ENCODE measurements at regions of chr3 and their contacts with region 1.

Region 1: GRCh38 chr3:187745201-187746058 is at the start of gene BCL6:
- DNase-seq: peak; percentile 91
- H3K4me3 Mint-ChIP-seq: peak within 1 kb of the TSS; percentile 90
- H3K27ac Mint-ChIP-seq: peak within 1 kb of the TSS; percentile 99
- H3K4me1 Mint-ChIP-seq: peaks cover 47% of the 10 kb centered on the region
- H3K27me3 Mint-ChIP-seq: no peaks in the 10 kb centered on the region
- total RNA-seq, gene BCL6: 41.4 to 51.3 TPM

Region 2: DNA sequence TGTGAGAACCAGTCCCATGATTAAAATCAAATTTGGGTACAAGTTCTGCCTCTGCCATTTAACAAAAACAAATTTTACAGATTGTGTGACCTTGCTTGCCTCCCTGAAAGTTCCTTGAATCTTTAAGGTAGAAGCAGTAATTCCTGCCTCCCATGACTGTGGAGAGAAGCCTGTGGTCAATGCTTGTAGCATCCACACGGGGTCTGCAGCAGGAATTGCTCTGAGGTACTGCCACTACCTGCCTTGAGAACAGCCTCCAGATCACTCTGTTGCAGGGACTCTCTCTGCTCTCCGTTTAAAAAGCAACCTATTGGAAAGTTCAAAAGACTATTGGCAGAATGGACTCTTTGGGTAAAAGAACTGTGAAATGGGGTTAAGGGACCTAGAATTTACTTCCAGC is 151.2 kb before region 1 on chr3:
- CTCF ChIA-PET with region 1: no interaction called
- POLR2A ChIA-PET with region 1: no interaction called
- intact Hi-C with region 1: no loop called
- DNase-seq: no peak
- H3K4me3 Mint-ChIP-seq: no peak overlapping the region
- H3K27ac Mint-ChIP-seq: no peak overlapping the region
- H3K4me1 Mint-ChIP-seq: no peaks in the 10 kb centered on the region
- H3K27me3 Mint-ChIP-seq: peaks cover 35% of the 10 kb centered on the region

Region 3: DNA sequence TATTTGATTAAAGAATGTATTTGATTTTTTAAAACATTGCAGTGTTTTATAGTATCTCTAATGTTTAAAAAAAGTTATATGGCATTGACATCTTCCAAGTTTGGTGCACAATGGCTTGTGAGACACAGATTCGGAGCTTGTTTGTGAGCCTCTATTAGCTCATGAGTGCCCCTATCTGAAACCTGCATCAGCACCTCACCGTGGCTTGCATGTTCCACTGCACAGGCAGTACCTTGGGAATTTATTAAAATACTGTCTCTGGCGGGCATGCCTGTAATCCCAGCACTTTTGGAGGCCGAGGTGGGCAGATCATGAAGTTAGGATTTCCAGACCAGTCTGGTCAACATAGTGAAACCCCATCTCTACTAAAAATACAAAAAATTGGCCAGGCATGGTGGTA is 36.3 kb before region 1 on chr3:
- CTCF ChIA-PET with region 1: no interaction called
- POLR2A ChIA-PET with region 1: no interaction called
- intact Hi-C with region 1: no loop called
- DNase-seq: no peak
- H3K4me3 Mint-ChIP-seq: no peak overlapping the region
- H3K27ac Mint-ChIP-seq: no peak overlapping the region
- H3K4me1 Mint-ChIP-seq: peaks cover 7% of the 10 kb centered on the region
- H3K27me3 Mint-ChIP-seq: no peaks in the 10 kb centered on the region

Region 4: DNA sequence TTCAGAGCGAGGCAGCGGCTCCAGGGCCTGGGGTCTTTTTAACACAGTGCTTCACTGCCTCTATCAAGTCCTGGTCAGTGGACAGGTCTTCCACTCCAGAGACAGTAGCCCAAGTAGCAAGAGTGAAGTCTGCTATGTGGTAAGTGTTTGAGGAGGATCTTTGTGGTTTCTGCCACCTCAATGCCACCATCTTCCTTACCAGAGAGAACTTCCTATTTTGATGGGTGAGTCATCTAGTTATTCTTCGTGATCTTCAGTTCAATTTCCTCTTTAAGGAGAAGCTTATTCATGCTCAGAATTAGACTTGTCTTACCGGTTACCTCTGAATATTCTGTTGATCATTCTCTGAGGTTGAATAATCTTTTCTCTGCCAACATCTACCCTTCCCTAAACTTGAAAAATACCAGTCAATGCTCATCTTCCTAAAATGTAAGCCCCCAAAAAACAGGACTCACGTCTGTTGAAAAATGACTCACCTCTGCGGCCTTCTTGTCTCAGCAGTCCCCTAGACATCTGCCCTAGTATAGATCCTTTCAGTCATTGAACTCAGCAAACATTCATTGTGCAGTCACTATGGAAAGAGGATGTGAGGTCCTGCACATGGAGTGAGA is 32.0 kb after region 1 on chr3:
- CTCF ChIA-PET with region 1: interaction called, 8 read pairs
- POLR2A ChIA-PET with region 1: interaction called, 9 read pairs
- intact Hi-C with region 1: loop called (anchors 1 kb)
- DNase-seq: peak; percentile 72
- H3K4me3 Mint-ChIP-seq: peak overlapping the region; percentile 21
- H3K27ac Mint-ChIP-seq: peak overlapping the region; percentile 91
- H3K4me1 Mint-ChIP-seq: peaks cover 50% of the 10 kb centered on the region
- H3K27me3 Mint-ChIP-seq: no peaks in the 10 kb centered on the region

Region 5: DNA sequence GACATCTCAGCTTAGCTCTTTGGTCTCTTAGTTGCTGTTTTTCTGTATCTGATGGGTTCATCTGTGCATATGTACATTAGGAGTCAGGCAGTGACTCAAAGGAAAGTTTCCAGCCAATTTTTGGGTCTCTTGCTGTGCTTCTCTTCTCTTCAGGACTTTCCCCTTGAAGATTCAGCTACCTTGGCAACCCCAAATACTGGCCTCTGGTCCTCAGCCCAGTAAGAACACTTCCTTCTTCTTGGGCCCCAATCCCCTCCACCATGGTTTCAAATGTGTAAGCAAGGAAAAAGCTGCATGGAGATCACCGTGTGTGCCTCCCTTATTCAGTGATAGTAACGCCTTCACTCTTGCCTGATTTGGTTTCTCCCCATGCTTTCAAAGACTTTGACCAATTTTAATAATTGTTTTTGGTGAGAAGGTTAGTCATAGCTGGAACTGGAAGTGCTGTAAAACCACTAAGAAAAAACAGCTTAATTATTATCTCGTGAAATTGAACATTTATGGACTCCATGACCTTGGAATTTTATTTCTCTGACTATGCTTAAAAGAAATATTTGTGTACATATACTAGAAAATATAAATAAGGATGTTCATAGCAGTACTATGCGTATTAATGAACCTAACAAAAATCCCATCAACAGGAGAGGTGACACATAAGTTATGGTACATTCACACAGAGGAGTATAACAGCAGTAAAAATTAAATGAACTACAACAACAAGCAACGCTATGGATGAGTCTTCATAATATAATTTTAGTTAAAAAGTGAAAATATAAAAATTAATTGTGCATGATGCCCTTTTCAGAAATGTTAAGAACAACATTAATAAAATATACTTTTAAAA is 125.2 kb after region 1 on chr3:
- CTCF ChIA-PET with region 1: interaction called, 15 read pairs
- POLR2A ChIA-PET with region 1: interaction called, 4 read pairs
- intact Hi-C with region 1: loop called (anchors 1 kb)
- DNase-seq: peak; percentile 45
- H3K4me3 Mint-ChIP-seq: no peak overlapping the region
- H3K27ac Mint-ChIP-seq: peak overlapping the region; percentile 40
- H3K4me1 Mint-ChIP-seq: peaks cover 22% of the 10 kb centered on the region
- H3K27me3 Mint-ChIP-seq: no peaks in the 10 kb centered on the region

Region 6: GRCh38 chr3:188154014-188154808 is 408.8 kb after region 1 on chr3 and contains the start of gene LPP:
- CTCF ChIA-PET with region 1: interaction called, 33 read pairs
- POLR2A ChIA-PET with region 1: interaction called, 16 read pairs
- intact Hi-C with region 1: loop called (anchors 1 kb)
- DNase-seq: peak; percentile 91
- H3K4me3 Mint-ChIP-seq: peak within 1 kb of the TSS; percentile 88
- H3K27ac Mint-ChIP-seq: peak within 1 kb of the TSS; percentile 97
- H3K4me1 Mint-ChIP-seq: peaks cover 63% of the 10 kb centered on the region
- H3K27me3 Mint-ChIP-seq: no peaks in the 10 kb centered on the region
- total RNA-seq, gene LPP: 41.0 to 43.6 TPM

Region 7: DNA sequence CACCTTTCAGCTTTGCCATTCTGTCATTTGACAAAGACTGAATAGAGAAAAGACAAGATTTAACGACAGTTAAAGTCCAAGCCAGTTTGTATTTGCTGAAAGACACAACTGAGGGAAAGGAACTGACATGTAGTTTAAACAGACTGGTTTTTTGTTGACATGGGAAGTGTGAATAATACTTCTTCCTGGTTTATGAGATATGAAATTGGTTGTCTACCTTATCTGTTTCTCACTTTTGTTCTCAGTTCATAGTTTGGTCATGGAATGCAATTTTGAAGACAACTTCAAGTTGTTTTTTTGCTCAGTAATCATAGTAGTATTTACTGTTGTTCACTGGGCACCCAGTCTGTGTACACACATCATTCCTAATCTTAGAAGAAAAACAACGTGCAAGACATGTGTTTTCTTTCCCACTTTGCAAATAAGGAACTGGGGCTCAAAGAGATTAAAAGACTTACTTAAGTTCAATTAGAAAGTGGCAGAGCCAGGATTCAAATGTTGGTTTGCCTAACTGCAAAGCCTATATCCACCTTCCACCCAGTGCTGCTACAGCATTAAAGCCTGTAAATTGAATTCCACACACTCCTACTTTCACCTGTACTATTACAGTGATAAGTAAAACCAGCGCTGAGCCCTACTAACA is 512.1 kb after region 1 on chr3:
- CTCF ChIA-PET with region 1: interaction called, 10 read pairs
- POLR2A ChIA-PET with region 1: interaction called, 13 read pairs
- intact Hi-C with region 1: loop called (anchors 1 kb)
- DNase-seq: no peak
- H3K4me3 Mint-ChIP-seq: no peak overlapping the region
- H3K27ac Mint-ChIP-seq: peak overlapping the region; percentile 47
- H3K4me1 Mint-ChIP-seq: peaks cover 49% of the 10 kb centered on the region
- H3K27me3 Mint-ChIP-seq: no peaks in the 10 kb centered on the region

Region 8: GRCh38 chr3:188294823-188295487 is 549.5 kb after region 1 on chr3:
- CTCF ChIA-PET with region 1: interaction called, 64 read pairs
- POLR2A ChIA-PET with region 1: interaction called, 16 read pairs
- intact Hi-C with region 1: loop called (anchors 1 kb)
- DNase-seq: no peak
- H3K4me3 Mint-ChIP-seq: no peak overlapping the region
- H3K27ac Mint-ChIP-seq: peak overlapping the region; percentile 72
- H3K4me1 Mint-ChIP-seq: peaks cover 79% of the 10 kb centered on the region
- H3K27me3 Mint-ChIP-seq: no peaks in the 10 kb centered on the region

Measured in activated CD4-positive, alpha-beta memory T cell treated with anti-CD3 and anti-CD28 coated beads for 36 hours (primary cell).